ENCODE measurements at regions of chr6 and their contacts with region 1.

Region 1: DNA sequence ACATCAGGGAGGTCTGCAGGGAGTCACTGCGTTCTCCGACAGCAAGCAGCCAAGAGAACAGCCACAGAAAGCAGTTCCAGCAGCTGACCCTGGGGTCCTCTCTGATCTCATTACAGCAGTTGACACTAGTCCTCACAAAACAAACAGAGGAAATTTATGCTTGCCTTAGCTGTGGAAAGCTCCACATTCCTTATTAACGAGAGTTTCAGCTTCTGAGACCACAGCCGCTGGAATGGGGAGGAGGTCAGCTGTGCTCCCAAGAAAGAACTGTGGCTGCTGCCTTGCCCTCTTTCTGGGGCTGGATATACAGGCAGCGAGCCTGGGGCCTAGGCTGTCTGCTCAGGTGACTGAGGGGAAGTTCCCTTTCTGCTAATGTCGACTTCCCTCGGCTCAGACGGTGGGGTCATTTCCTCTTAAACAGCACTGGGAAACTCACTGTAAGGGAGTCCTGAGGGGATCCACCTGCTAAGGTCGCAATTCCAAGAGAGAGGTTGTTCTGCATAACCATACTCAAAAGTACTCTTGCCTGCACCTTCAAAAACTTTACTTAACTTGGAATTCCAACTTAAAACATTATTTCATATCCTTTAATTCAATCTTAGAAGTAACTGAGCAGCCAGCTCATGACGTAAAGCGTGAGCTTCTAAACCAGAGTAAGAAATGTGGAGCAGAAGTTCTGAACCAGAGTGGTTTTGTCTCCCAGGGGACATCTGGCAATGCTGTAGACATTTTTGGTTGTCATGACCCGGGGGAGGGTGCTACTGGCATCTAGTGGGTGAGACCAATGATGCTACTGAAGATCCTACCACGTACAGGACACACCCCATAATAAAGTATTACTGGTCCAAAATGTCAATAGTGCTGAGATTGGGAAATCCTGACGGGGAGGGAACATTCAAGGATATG is 80.3 kb downstream of the BACH2 start:
- DNase-seq: peak in 1 of 2 donors; percentile 81
- ATAC-seq: peak in 1 of 3 donors; percentile 20
- H3K4me3 ChIP-seq: no peak overlapping the region
- H3K4me3 Mint-ChIP-seq: no peak overlapping the region
- H3K27ac ChIP-seq: peak overlapping the region; percentile 82
- H3K27ac Mint-ChIP-seq: peak overlapping the region in 1 of 2 donors; percentile 63
- H3K4me1 ChIP-seq: peaks cover 36% of the 10 kb centered on the region
- H3K4me1 Mint-ChIP-seq: peaks cover 0 to 9% of the 10 kb centered on the region in 2 donors
- H3K27me3 ChIP-seq: no peaks in the 10 kb centered on the region
- H3K27me3 Mint-ChIP-seq: no peaks in the 10 kb centered on the region
- CTCF ChIP-seq: no peak

Region 2: DNA sequence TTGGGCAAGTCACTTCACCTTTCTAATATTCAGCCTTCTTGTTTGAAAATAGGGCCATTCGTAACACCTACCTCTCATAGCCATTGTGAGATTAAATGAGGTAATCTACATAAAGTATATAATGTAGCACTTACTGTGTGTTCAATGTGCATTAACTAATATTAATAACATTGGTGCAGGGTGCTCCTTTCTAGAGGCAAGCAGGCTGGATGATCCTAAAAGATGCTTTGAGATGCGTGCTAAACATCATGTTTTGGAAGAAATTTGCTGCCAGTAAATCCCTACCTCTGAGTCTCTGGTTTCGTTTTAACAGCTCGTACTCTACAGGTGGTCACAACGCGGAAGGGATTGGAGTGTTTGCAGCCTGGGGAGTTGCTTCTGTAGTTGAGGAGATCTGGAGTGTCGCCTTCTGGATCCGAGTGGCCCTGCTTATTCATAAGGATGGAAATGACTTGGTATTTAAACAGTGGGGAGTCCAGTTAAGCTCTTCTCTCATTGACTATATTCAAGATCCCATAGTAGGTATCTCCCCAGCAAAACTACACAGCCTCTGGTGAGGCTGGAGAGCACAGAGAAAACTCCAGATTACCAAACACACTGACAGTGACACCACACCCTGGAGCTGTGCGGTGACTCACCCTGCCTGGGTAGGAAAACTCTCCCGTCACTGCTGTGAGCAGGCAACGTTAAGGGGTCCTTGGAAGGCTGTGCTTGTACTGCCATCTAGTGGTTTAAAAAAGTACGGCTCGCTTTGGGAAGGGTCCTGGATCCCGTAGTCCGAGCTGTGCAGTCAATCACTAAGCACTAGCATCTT is 262.7 kb after region 1 on chr6:
- intact Hi-C with region 1: loop called (anchors 1 kb)
- DNase-seq: peak; percentile 68 to 92
- ATAC-seq: peak; percentile 92 to 97 (median 97)
- H3K4me3 ChIP-seq: no peak overlapping the region
- H3K4me3 Mint-ChIP-seq: no peak overlapping the region
- H3K27ac ChIP-seq: no peak overlapping the region
- H3K27ac Mint-ChIP-seq: peak overlapping the region in 1 of 2 donors; percentile 87
- H3K4me1 ChIP-seq: peaks cover 13% of the 10 kb centered on the region
- H3K4me1 Mint-ChIP-seq: peaks cover 11 to 12% of the 10 kb centered on the region in 2 donors
- H3K27me3 ChIP-seq: no peaks in the 10 kb centered on the region
- H3K27me3 Mint-ChIP-seq: no peaks in the 10 kb centered on the region
- CTCF ChIP-seq: peak; percentile 93

Measured in natural killer cell (primary cell).